ENCODE measurements at regions of chr6 and their contacts with region 1.

Region 1: GRCh38 chr6:132484680-132485018 is 28.3 kb downstream of the STX7 start:
- DNase-seq: no peak
- H3K4me3 ChIP-seq: no peak overlapping the region
- H3K27ac ChIP-seq: no peak overlapping the region
- H3K4me1 ChIP-seq: peaks cover 45% of the 10 kb centered on the region
- H3K27me3 ChIP-seq: no peaks in the 10 kb centered on the region
- CTCF ChIP-seq: no peak

Region 2: GRCh38 chr6:132279592-132280139 is 205.0 kb before region 1 on chr6:
- intact Hi-C with region 1: loop called (anchors 5 kb)
- DNase-seq: peak; percentile 57
- H3K4me3 ChIP-seq: peak overlapping the region; percentile 61
- H3K27ac ChIP-seq: no peak overlapping the region
- H3K4me1 ChIP-seq: no peaks in the 10 kb centered on the region
- H3K27me3 ChIP-seq: peaks cover 37% of the 10 kb centered on the region
- CTCF ChIP-seq: peak; percentile 90

Region 3: GRCh38 chr6:133136177-133136880 is 651.7 kb after region 1 on chr6:
- intact Hi-C with region 1: no loop called
- DNase-seq: no peak
- H3K4me3 ChIP-seq: no peak overlapping the region
- H3K27ac ChIP-seq: no peak overlapping the region
- H3K4me1 ChIP-seq: peaks cover 23% of the 10 kb centered on the region
- H3K27me3 ChIP-seq: no peaks in the 10 kb centered on the region
- CTCF ChIP-seq: no peak

Measured in left ventricle myocardium inferior (tissue), 1 donor.